ENCODE measurements at regions of chr7 and their contacts with region 1.

Region 1: GRCh38 chr7:107743567-107744344 is at the start of gene CBLL1:
- DNase-seq: peak; percentile 97
- ATAC-seq: peak; percentile 89
- H3K4me3 ChIP-seq: peak within 1 kb of the TSS; percentile 66 to 90 (median 89)
- H3K4me3 Mint-ChIP-seq: peak within 1 kb of the TSS; percentile 99
- H3K27ac ChIP-seq: peak within 1 kb of the TSS; percentile 97
- H3K27ac Mint-ChIP-seq: peak within 1 kb of the TSS; percentile 100
- H3K4me1 ChIP-seq: peaks cover 26 to 30% of the 10 kb centered on the region in 2 donors
- H3K4me1 Mint-ChIP-seq: peaks cover 45% of the 10 kb centered on the region
- H3K27me3 ChIP-seq: no peaks in the 10 kb centered on the region
- H3K27me3 Mint-ChIP-seq: no peaks in the 10 kb centered on the region
- CTCF ChIP-seq: peak; percentile 67
- total RNA-seq, gene CBLL1: 49.9 and 57.2 TPM in 2 replicates

Region 2: DNA sequence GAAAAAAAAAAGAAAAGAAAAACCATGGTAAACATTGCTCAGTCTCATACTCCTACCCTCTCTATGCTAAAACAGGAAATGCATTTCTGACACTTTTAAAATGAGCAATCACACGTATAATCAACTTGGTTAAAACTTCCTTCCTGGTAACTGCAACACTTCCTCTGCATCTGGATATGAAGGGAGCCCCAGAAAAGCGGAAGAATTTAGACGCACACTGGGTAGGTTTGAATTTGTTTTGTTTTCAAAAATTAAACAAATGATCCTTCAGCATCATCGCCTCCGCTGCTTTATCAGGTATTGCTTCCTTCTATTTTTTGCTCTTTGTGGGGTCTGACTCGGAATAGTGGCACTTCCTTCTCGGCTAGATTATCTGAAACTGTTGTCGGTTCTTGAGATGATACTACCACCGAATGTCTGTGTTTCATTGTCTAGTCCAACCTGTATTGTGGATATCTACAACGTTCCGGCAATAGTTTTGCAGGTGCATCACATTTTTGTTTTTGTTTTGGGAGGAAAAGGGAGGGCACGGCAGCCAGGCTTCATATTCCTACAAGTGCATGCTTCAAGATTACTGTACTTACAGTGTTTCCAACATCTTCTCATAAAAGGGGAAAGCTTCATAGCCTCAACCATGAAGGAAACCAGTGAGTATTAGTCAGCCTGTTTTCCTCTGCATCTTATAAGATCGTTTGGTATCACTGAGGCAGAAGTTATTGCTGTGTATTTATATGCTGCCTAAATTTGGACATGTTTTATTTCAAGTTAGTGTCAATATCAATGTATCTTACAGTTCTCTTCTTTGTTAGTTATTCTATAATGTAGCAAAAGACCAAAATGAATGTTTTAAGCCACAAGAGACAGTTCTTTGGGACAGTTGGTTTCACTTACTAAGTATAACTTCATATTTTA is 878.4 kb before region 1 on chr7 and contains the start of gene PIK3CG:
- CTCF ChIA-PET with region 1: no interaction called
- POLR2A ChIA-PET with region 1: no interaction called
- intact Hi-C with region 1: loop called (anchors 1 kb)
- DNase-seq: peak; percentile 90
- ATAC-seq: peak; percentile 75
- H3K4me3 ChIP-seq: peak within 1 kb of the TSS; percentile 72 to 100 (median 81)
- H3K4me3 Mint-ChIP-seq: peak within 1 kb of the TSS; percentile 89
- H3K27ac ChIP-seq: peak within 1 kb of the TSS; percentile 92
- H3K27ac Mint-ChIP-seq: peak within 1 kb of the TSS; percentile 86
- H3K4me1 ChIP-seq: peaks cover 49 to 57% of the 10 kb centered on the region in 2 donors
- H3K4me1 Mint-ChIP-seq: peaks cover 77% of the 10 kb centered on the region
- H3K27me3 ChIP-seq: no peaks in the 10 kb centered on the region
- H3K27me3 Mint-ChIP-seq: no peaks in the 10 kb centered on the region
- CTCF ChIP-seq: no peak
- total RNA-seq, gene PIK3CG: 44.8 and 46.9 TPM in 2 replicates

Region 3: GRCh38 chr7:107446531-107446930 is 297.2 kb before region 1 on chr7:
- CTCF ChIA-PET with region 1: no interaction called
- POLR2A ChIA-PET with region 1: no interaction called
- intact Hi-C with region 1: no loop called
- DNase-seq: no peak
- ATAC-seq: no peak
- H3K4me3 ChIP-seq: no peak overlapping the region
- H3K4me3 Mint-ChIP-seq: no peak overlapping the region
- H3K27ac ChIP-seq: no peak overlapping the region
- H3K27ac Mint-ChIP-seq: no peak overlapping the region
- H3K4me1 ChIP-seq: no peaks in the 10 kb centered on the region
- H3K4me1 Mint-ChIP-seq: peaks cover 8% of the 10 kb centered on the region
- H3K27me3 ChIP-seq: no peaks in the 10 kb centered on the region
- H3K27me3 Mint-ChIP-seq: no peaks in the 10 kb centered on the region
- CTCF ChIP-seq: no peak

Region 4: DNA sequence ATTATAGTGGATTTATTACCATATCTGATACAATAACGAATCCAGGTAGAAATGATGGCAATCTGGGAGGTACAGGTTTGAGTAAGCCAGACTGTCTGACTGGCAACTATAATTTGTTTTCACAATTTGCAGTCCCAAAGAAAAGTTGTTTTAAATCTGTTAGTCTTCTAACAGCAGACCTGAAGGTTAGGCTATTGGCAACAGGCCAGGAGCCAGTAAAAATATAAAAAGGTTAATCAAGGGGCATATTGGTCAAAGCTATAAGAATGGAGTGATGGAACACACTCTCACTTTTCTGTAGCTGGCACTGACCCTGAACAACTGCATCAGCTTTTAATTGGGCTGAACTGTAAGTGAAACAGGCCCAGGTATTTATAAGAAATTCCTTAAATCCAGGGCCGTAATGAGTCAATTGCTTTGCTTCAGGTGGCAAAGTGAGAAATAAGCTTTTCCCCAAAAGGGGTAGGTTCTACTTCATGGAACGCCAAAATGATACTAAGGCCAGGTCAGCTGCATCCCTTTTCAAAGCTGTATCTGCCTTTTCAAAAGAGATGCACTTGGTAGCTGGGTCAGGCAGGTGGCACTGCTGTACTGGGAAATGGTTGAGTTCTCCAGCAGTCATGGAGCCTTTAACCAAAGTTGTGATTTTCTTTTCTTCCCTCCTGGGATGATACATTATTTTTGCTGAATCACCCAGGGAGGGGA is 280.9 kb before region 1 on chr7:
- CTCF ChIA-PET with region 1: interaction called, 13 read pairs
- POLR2A ChIA-PET with region 1: no interaction called
- intact Hi-C with region 1: no loop called
- DNase-seq: peak; percentile 67
- ATAC-seq: peak; percentile 72
- H3K4me3 ChIP-seq: no peak overlapping the region
- H3K4me3 Mint-ChIP-seq: no peak overlapping the region
- H3K27ac ChIP-seq: no peak overlapping the region
- H3K27ac Mint-ChIP-seq: no peak overlapping the region
- H3K4me1 ChIP-seq: no peaks in the 10 kb centered on the region
- H3K4me1 Mint-ChIP-seq: no peaks in the 10 kb centered on the region
- H3K27me3 ChIP-seq: no peaks in the 10 kb centered on the region
- H3K27me3 Mint-ChIP-seq: no peaks in the 10 kb centered on the region
- CTCF ChIP-seq: peak; percentile 79

Region 5: GRCh38 chr7:107638594-107638993 is 105.2 kb before region 1 on chr7:
- CTCF ChIA-PET with region 1: interaction called, 8 read pairs
- POLR2A ChIA-PET with region 1: interaction called, 5 read pairs
- intact Hi-C with region 1: loop called (anchors 1 kb)
- DNase-seq: peak; percentile 82
- ATAC-seq: peak; percentile 77
- H3K4me3 ChIP-seq: peak overlapping the region in 4 of 5 experiments; percentile 7 to 52 (median 26)
- H3K4me3 Mint-ChIP-seq: peak overlapping the region; percentile 77
- H3K27ac ChIP-seq: peak overlapping the region; percentile 78 to 85
- H3K27ac Mint-ChIP-seq: peak overlapping the region; percentile 96
- H3K4me1 ChIP-seq: peaks cover 44 to 56% of the 10 kb centered on the region in 2 donors
- H3K4me1 Mint-ChIP-seq: peaks cover 56% of the 10 kb centered on the region
- H3K27me3 ChIP-seq: no peaks in the 10 kb centered on the region
- H3K27me3 Mint-ChIP-seq: no peaks in the 10 kb centered on the region
- CTCF ChIP-seq: no peak

Region 6: DNA sequence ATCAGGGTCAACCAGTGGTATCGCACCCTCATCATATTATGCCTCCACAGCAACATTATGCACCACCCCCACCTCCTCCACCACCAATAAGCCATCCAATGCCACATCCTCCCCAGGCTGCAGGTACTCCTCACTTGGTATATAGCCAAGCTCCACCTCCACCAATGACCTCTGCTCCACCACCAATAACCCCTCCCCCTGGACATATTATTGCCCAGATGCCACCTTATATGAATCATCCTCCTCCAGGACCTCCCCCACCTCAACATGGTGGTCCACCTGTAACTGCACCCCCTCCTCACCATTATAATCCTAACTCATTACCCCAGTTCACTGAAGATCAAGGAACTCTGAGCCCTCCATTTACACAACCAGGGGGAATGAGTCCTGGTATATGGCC is 14.9 kb after region 1 on chr7:
- CTCF ChIA-PET with region 1: no interaction called
- POLR2A ChIA-PET with region 1: no interaction called
- intact Hi-C with region 1: no loop called
- DNase-seq: no peak
- ATAC-seq: no peak
- H3K4me3 ChIP-seq: no peak overlapping the region
- H3K4me3 Mint-ChIP-seq: no peak overlapping the region
- H3K27ac ChIP-seq: no peak overlapping the region
- H3K27ac Mint-ChIP-seq: no peak overlapping the region
- H3K4me1 ChIP-seq: no peaks in the 10 kb centered on the region
- H3K4me1 Mint-ChIP-seq: no peaks in the 10 kb centered on the region
- H3K27me3 ChIP-seq: no peaks in the 10 kb centered on the region
- H3K27me3 Mint-ChIP-seq: no peaks in the 10 kb centered on the region
- CTCF ChIP-seq: no peak

Region 7: DNA sequence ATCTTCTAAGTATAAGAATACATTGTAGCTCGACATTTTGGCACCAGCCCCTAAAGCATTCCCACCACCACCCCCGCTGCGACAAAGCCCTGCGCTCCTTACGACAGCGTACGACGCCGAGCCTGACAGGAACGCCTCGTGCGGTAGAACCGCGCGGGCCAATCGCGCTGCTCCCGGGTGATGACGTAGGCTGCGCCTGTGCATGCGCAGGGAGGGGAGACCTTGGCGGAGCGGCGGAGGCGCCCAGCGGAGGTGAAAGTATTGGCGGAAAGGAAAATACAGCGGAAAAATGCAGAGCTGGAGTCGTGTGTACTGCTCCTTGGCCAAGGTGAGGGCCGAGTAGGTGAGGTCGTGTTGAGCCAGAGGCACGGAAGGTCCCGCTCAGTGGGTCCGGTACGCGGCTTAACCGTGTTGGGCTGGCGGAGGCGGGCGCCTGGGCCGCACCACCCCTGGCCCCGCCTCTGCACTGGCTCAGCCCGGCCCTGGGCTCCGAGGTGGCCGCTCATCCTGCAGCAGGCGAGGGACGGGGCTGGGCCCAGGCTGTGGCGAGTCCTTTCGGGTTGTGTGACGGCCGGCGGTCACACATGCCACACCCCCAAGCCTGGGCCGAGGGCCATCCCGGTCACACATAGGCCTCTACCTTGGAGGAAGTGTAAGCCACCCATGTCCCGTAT is 147.3 kb after region 1 on chr7 and contains the start of gene DLD:
- CTCF ChIA-PET with region 1: no interaction called
- POLR2A ChIA-PET with region 1: interaction called, 6 read pairs
- intact Hi-C with region 1: loop called (anchors 1 kb)
- DNase-seq: peak; percentile 95
- ATAC-seq: peak; percentile 98
- H3K4me3 ChIP-seq: peak within 1 kb of the TSS; percentile 72 to 86 (median 83)
- H3K4me3 Mint-ChIP-seq: peak within 1 kb of the TSS; percentile 99
- H3K27ac ChIP-seq: peak within 1 kb of the TSS; percentile 91 to 97
- H3K27ac Mint-ChIP-seq: peak within 1 kb of the TSS; percentile 97
- H3K4me1 ChIP-seq: peaks cover 9 to 26% of the 10 kb centered on the region in 2 donors
- H3K4me1 Mint-ChIP-seq: peaks cover 46% of the 10 kb centered on the region
- H3K27me3 ChIP-seq: no peaks in the 10 kb centered on the region
- H3K27me3 Mint-ChIP-seq: peaks cover 4% of the 10 kb centered on the region
- CTCF ChIP-seq: no peak
- total RNA-seq, gene DLD: 47.9 and 48.8 TPM in 2 replicates

Region 8: GRCh38 chr7:108569381-108570145 is 825.8 kb after region 1 on chr7 and contains the starts of genes DNAJB9 and THAP5:
- CTCF ChIA-PET with region 1: no interaction called
- POLR2A ChIA-PET with region 1: no interaction called
- intact Hi-C with region 1: loop called (anchors 1 kb)
- DNase-seq: peak; percentile 100
- ATAC-seq: peak; percentile 87
- H3K4me3 ChIP-seq: peak within 1 kb of the TSS; percentile 79 to 92 (median 89)
- H3K4me3 Mint-ChIP-seq: peak within 1 kb of the TSS; percentile 96
- H3K27ac ChIP-seq: peak within 1 kb of the TSS; percentile 99 to 100
- H3K27ac Mint-ChIP-seq: peak within 1 kb of the TSS; percentile 98
- H3K4me1 ChIP-seq: peaks cover 16 to 39% of the 10 kb centered on the region in 2 donors
- H3K4me1 Mint-ChIP-seq: peaks cover 51% of the 10 kb centered on the region
- H3K27me3 ChIP-seq: no peaks in the 10 kb centered on the region
- H3K27me3 Mint-ChIP-seq: no peaks in the 10 kb centered on the region
- CTCF ChIP-seq: no peak
- total RNA-seq, gene DNAJB9: 19.5 and 21.1 TPM in 2 replicates
- total RNA-seq, gene THAP5: 48.8 and 49.0 TPM in 2 replicates

Measured in B cell (primary cell).